Heart right ventricle (tissue), 16 donors: ENCODE measurements at regions of chr5 and their contacts with region 1.

Region 1: DNA sequence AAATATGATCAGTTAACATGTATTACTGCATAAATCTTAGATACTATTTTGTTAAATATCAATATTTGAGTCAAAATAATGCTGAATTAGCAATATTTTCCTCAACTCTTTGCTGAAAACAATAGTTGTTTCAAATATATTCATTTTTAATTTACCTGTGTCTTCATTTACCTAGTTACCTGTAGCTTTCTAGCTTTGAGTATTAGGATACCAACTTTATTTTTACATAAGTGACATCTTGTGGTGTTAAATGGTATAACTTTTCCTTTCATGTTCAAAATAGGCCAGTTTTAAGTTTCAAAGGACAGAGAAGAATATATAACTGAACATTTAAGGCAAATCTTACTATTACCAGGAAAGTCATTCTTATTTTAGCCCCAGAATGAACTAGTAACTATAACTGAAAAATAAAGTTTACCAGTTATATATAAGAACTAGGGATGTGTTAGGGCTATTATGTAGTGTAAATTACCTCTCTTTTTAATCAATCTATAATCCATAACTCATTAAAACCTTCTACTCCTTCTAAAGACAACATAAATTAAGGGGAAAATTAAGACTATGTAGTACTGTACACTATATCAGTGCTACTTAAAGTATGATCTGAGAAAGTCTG is 25.3 kb downstream of the AP3B1 start:
- DNase-seq: no peak
- ATAC-seq: no peak
- H3K4me3 ChIP-seq: no peak overlapping the region
- H3K27ac ChIP-seq: peak overlapping the region in 2 of 10 donors; percentile 7 to 21
- H3K4me1 ChIP-seq: peaks cover 0 to 30% (median 18%) of the 10 kb centered on the region in 9 donors
- H3K27me3 ChIP-seq: no peaks in the 10 kb centered on the region
- CTCF ChIP-seq: peak; percentile 13 to 66 (median 54)

Region 2: DNA sequence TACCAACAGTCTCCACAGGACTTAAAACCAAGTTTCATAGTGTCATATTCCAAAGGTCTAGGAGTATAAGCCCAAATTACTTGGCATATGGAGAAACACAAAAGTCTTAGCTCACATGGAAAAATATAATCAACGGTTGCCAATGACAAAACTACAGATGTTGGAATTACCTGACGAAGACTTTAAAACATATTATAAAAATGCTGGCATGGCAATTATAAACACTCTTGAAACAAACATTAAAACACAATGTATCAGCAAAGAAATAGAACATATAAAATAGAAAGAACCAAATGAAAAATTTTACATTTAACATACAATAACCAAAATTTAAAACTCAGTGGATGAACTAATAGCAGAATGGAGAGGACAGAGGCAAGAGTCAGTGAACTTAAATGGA is 769.2 kb before region 1 on chr5:
- intact Hi-C with region 1: loop called in 1 of 10 experiments (anchors 10 kb)
- DNase-seq: no peak
- ATAC-seq: no peak
- H3K4me3 ChIP-seq: no peak overlapping the region
- H3K27ac ChIP-seq: no peak overlapping the region
- H3K4me1 ChIP-seq: peaks cover 0 to 6% (median 0%) of the 10 kb centered on the region in 9 donors
- H3K27me3 ChIP-seq: peaks cover 0 to 10% (median 0%) of the 10 kb centered on the region in 7 donors
- CTCF ChIP-seq: no peak

Region 3: GRCh38 chr5:77981818-77982217 is 287.4 kb before region 1 on chr5:
- intact Hi-C with region 1: no loop called
- DNase-seq: no peak
- ATAC-seq: no peak
- H3K4me3 ChIP-seq: no peak overlapping the region
- H3K27ac ChIP-seq: no peak overlapping the region
- H3K4me1 ChIP-seq: peaks cover 0 to 3% (median 0%) of the 10 kb centered on the region in 9 donors
- H3K27me3 ChIP-seq: peaks cover 0 to 20% (median 12%) of the 10 kb centered on the region in 7 donors
- CTCF ChIP-seq: no peak

Region 4: GRCh38 chr5:78355561-78355960 is 86.4 kb after region 1 on chr5:
- intact Hi-C with region 1: no loop called
- DNase-seq: no peak
- ATAC-seq: no peak
- H3K4me3 ChIP-seq: no peak overlapping the region
- H3K27ac ChIP-seq: peak overlapping the region in 1 of 10 donors; percentile 48
- H3K4me1 ChIP-seq: peaks cover 0 to 19% (median 11%) of the 10 kb centered on the region in 9 donors
- H3K27me3 ChIP-seq: no peaks in the 10 kb centered on the region
- CTCF ChIP-seq: no peak

Region 5: GRCh38 chr5:78795757-78796156 is 526.6 kb after region 1 on chr5:
- intact Hi-C with region 1: no loop called
- DNase-seq: no peak
- ATAC-seq: no peak
- H3K4me3 ChIP-seq: no peak overlapping the region
- H3K27ac ChIP-seq: no peak overlapping the region
- H3K4me1 ChIP-seq: peaks cover 0 to 21% (median 0%) of the 10 kb centered on the region in 9 donors
- H3K27me3 ChIP-seq: no peaks in the 10 kb centered on the region
- CTCF ChIP-seq: no peak